ENCODE measurements at regions of chr3 and their contacts with region 1.

Region 1: GRCh38 chr3:9843715-9844438 is at the start of gene RPUSD3:
- DNase-seq: peak; percentile 93 to 99 (median 96)
- ATAC-seq: peak; percentile 98
- H3K4me3 ChIP-seq: peak within 1 kb of the TSS; percentile 96 to 99
- H3K4me3 Mint-ChIP-seq: peak within 1 kb of the TSS; percentile 97
- H3K27ac ChIP-seq: peak within 1 kb of the TSS; percentile 64 to 82
- H3K27ac Mint-ChIP-seq: peak within 1 kb of the TSS; percentile 90
- H3K4me1 ChIP-seq: peaks cover 6% of the 10 kb centered on the region
- H3K4me1 Mint-ChIP-seq: peaks cover 26% of the 10 kb centered on the region
- H3K27me3 ChIP-seq: no peaks in the 10 kb centered on the region
- H3K27me3 Mint-ChIP-seq: no peaks in the 10 kb centered on the region
- CTCF ChIP-seq: no peak
- total RNA-seq, gene RPUSD3: 5.3 to 6.4 TPM

Region 2: GRCh38 chr3:9809615-9810432 is 34.1 kb before region 1 on chr3 and contains the start of gene TTLL3:
- CTCF ChIA-PET with region 1: interaction called, 3 read pairs
- POLR2A ChIA-PET with region 1: interaction called, 5 read pairs
- intact Hi-C with region 1: loop called in 1 of 2 experiments (anchors 2 kb)
- DNase-seq: peak; percentile 6 to 76 (median 47)
- ATAC-seq: peak; percentile 64
- H3K4me3 ChIP-seq: peak within 1 kb of the TSS; percentile 59 to 62
- H3K4me3 Mint-ChIP-seq: peak within 1 kb of the TSS; percentile 87
- H3K27ac ChIP-seq: peak within 1 kb of the TSS; percentile 62 to 89
- H3K27ac Mint-ChIP-seq: peak within 1 kb of the TSS; percentile 93
- H3K4me1 ChIP-seq: peaks cover 22% of the 10 kb centered on the region
- H3K4me1 Mint-ChIP-seq: peaks cover 37% of the 10 kb centered on the region
- H3K27me3 ChIP-seq: no peaks in the 10 kb centered on the region
- H3K27me3 Mint-ChIP-seq: no peaks in the 10 kb centered on the region
- CTCF ChIP-seq: no peak
- total RNA-seq, gene TTLL3: 44.6 to 46.2 TPM

Measured in CD8-positive, alpha-beta T cell (primary cell).